HepG2 (cell line): ENCODE measurements at regions of chr12 and their contacts with region 1.

Region 1: GRCh38 chr12:111029732-111030131 is 109.4 kb upstream of the MYL2 start:
- DNase-seq: no peak
- ATAC-seq: no peak
- H3K4me3 ChIP-seq: no peak overlapping the region
- H3K27ac ChIP-seq: no peak overlapping the region
- H3K4me1 ChIP-seq: no peaks in the 10 kb centered on the region
- H3K27me3 ChIP-seq: peaks cover 0 to 19% of the 10 kb centered on the region in 2 experiments; a peak in 3 of 5 replicates
- CTCF ChIP-seq: no peak
- EP300 ChIP-seq: no peak
- POLR2A ChIP-seq: no peak
- RAD21 ChIP-seq: no peak

Region 2: DNA sequence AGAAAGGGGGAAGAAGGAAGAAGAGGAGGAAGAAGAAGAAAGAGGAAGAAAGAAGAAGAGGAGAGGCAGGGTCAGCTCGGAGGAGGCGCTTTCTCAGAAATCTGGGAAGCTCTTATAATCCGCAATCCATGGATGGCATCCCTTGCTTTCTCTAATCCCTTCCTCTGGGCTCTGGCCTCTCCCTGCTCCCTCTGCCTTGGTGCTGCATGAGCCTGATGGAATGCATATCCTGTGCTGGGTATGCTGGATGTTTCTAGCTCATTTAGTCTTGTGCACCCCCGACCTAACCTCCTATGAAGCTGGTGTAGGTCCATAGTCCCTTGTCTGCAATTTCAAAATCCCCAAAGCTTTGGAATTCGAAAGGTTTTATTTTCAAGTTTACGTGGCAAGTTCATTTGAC is 15.2 kb before region 1 on chr12:
- CTCF ChIA-PET with region 1: no interaction called
- POLR2A ChIA-PET with region 1: no interaction called
- in situ Hi-C with region 1: no loop called
- intact Hi-C with region 1: no loop called
- DNase-seq: no peak
- ATAC-seq: no peak
- H3K4me3 ChIP-seq: no peak overlapping the region
- H3K27ac ChIP-seq: no peak overlapping the region
- H3K4me1 ChIP-seq: no peaks in the 10 kb centered on the region
- H3K27me3 ChIP-seq: peaks cover 0 to 2% of the 10 kb centered on the region in 2 experiments; a peak in 3 of 5 replicates
- CTCF ChIP-seq: no peak
- EP300 ChIP-seq: no peak
- POLR2A ChIP-seq: no peak
- RAD21 ChIP-seq: no peak

Region 3: DNA sequence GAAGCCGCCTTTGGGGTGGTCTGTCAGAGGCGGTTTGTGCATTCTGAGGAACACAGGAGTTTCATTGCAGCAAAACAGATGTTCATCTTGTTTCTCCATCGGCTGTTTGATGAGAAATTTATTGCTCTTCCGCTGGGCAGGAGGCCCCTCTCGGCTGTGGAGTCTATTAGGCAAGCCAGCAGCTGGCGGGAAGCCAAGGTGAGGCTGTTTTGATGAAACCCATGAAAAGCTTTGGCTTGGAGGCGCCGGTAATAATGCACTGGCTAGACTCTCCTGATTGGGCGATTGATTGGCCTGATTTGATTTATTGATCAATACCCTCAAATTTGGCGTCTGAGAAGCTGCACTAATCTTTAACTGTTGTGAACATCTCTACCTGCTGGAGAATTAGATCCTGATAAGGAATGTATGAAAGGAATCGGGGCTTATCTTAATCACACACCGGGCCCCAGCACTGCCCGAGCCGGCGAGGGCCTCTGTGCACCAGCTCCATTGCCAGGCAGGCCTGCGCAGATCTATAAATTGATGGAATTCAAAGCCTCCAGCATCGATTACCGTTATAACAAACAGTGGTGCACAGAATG is 151.5 kb after region 1 on chr12:
- CTCF ChIA-PET with region 1: no interaction called
- POLR2A ChIA-PET with region 1: no interaction called
- in situ Hi-C with region 1: no loop called
- intact Hi-C with region 1: no loop called
- DNase-seq: no peak
- ATAC-seq: no peak
- H3K4me3 ChIP-seq: no peak overlapping the region
- H3K27ac ChIP-seq: no peak overlapping the region
- H3K4me1 ChIP-seq: no peaks in the 10 kb centered on the region
- H3K27me3 ChIP-seq: peaks cover 0 to 18% of the 10 kb centered on the region in 2 experiments; a peak in 2 of 5 replicates
- CTCF ChIP-seq: no peak
- EP300 ChIP-seq: no peak
- POLR2A ChIP-seq: no peak
- RAD21 ChIP-seq: no peak

Region 4: GRCh38 chr12:111298582-111299436 is 269.1 kb after region 1 on chr12:
- CTCF ChIA-PET with region 1: interaction called, 12 read pairs
- POLR2A ChIA-PET with region 1: no interaction called
- in situ Hi-C with region 1: loop called (anchors 5 kb)
- intact Hi-C with region 1: loop called (anchors 1 kb)
- DNase-seq: peak; percentile 41
- ATAC-seq: peak; percentile 91
- H3K4me3 ChIP-seq: no peak overlapping the region
- H3K27ac ChIP-seq: no peak overlapping the region
- H3K4me1 ChIP-seq: no peaks in the 10 kb centered on the region
- H3K27me3 ChIP-seq: peaks cover 0 to 4% of the 10 kb centered on the region in 2 experiments; a peak in 1 of 5 replicates
- CTCF ChIP-seq: peak; percentile 85
- EP300 ChIP-seq: no peak
- POLR2A ChIP-seq: no peak
- RAD21 ChIP-seq: no peak; the same call in 1 of the 2 replicates